ENCODE measurements at regions of chr15 and their contacts with region 1.

Region 1: DNA sequence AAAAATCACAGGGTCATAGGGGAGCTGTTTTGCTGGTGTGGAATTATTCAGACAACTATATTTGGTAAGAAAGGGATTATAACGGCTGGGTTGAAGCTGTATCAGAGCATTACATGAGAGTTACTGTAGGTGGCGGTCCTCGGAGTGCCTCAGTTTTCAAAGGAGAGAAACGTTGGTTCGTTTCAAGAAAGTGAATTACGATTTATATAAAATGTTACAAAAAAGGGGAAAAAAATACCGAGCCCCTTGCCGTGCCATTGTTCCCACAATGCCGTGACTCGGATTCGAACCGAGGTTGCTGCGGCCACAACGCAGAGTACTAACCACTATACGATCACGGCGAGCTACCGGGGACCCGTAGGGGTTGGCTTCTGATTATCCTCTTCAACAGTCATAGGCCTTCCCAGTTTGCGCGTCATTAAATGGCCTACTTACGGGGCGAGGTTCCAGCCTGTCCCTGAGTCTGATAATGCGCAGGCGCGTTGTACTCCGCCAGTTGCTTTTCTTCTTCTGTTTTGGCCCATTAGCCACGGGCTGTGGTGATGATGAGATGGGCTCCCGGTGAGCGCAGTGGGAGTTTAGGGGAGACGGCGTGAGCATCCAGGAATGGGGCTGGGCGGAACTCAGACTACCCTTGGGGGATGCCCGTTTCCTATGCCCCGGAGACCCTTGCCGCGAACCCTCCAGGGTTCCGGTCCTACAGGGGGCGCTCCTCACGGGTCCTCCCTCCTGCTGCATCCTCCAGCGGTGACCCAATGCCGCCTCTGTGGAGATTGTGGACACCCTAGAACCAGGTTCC is 10.8 kb upstream of the SHF start:
- DNase-seq: peak; percentile 94
- ATAC-seq: peak; percentile 82

Region 2: DNA sequence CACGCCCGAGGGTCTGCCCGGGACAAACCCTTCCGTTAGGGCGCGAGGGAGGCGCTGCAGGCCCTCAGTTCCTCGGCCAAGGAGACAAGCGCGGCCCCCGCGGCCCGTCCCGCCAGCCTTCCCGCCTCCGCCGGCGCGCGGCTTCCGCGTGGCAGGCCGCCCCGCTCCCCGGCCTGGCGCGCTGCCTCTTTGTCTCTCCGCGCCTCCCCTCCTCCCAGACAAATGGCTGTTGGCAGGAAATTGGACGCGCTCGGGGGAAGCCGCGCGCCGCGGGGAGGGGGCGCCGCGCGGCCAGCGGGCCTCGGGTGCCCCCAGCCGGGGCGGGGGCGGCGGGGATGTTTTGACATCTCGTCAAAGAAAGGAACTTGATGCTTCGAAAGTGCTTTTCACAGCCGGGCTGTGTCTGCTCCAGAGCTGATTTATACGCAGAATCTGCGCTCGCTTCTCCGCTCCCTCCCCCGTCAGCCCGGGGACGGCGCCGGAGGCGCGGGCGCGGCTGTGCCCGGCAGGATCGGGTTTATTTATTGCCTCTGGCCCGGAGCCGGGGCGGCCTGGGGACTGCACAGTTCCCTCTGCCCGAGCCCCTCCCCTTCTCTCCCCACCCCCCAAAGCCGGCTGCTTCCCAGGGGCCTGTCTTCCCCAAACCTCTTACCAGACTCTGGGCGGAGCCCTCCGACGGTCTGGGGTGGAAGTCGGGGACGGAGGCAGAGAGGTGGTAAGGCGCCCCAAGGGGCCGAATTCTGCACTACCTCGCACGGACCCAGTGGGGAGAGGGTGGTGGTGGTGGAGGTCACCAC is 31.5 kb before region 1 on chr15:
- intact Hi-C with region 1: loop called (anchors 1 kb)
- DNase-seq: peak; percentile 95
- ATAC-seq: peak; percentile 85

Region 3: DNA sequence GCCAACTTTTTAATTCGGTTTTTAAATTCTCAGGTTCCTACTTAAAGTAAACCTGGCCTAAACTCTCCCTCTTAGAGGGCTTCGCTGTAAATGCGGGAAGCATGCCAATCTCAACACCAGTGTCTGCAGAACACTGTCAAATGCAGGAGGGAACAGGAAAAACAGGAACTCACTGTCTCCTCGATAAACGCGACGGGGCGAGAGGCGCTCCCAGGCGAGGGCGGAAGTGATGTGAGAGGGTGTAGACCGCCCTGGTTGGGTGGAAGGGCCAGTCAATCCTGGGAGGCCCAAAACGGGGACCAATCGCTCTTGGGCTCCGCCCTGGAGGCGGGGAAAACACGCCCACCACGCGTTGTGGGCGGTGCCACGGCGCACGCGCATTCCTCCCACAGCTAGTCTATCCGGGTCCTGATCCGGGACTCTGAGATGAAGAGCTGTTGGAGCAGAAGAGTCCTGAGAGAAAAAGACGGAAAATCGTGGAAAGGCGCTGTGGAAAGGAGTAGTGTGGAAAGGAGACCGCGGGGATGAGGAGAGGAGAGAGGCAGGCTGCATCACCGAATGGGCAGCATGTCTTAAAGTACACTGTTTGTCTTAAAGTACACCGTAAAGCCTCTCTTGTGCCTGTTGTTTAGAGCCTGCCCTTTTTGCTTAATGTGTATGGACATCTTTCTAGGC is 80.6 kb after region 1 on chr15:
- intact Hi-C with region 1: loop called (anchors 1 kb)
- DNase-seq: peak; percentile 96
- ATAC-seq: peak; percentile 100

Region 4: GRCh38 chr15:45386420-45386819 is 187.9 kb after region 1 on chr15:
- intact Hi-C with region 1: loop called (anchors 5 kb)
- DNase-seq: no peak
- ATAC-seq: peak; percentile 86

Region 5: GRCh38 chr15:45402162-45402954 is 203.8 kb after region 1 on chr15:
- intact Hi-C with region 1: loop called (anchors 5 kb)
- DNase-seq: peak; percentile 97
- ATAC-seq: peak; percentile 98

Region 6: GRCh38 chr15:45414215-45414885 is 215.8 kb after region 1 on chr15:
- intact Hi-C with region 1: no loop called
- DNase-seq: no peak
- ATAC-seq: no peak

Region 7: GRCh38 chr15:45522328-45523160 is 324.0 kb after region 1 on chr15 and contains the start of gene SLC30A4:
- intact Hi-C with region 1: loop called (anchors 10 kb)
- DNase-seq: peak; percentile 85
- ATAC-seq: peak; percentile 98
- total RNA-seq, gene SLC30A4: 4.0 TPM

Measured in Right ventricle myocardium inferior (tissue), 1 donor.